ENCODE measurements at regions of chr7 and their contacts with region 1.

Region 1: GRCh38 chr7:116984917-116985316 is 31.6 kb downstream of the ST7 start:
- DNase-seq: peak in 3 of 14 experiments; percentile 55 to 62 (median 61)
- ATAC-seq: peak; percentile 55
- H3K4me3 ChIP-seq: no peak overlapping the region
- H3K4me3 Mint-ChIP-seq: no peak overlapping the region
- H3K27ac ChIP-seq: no peak overlapping the region
- H3K27ac Mint-ChIP-seq: no peak overlapping the region
- H3K4me1 ChIP-seq: no peaks in the 10 kb centered on the region
- H3K4me1 Mint-ChIP-seq: peaks cover 3% of the 10 kb centered on the region
- H3K27me3 ChIP-seq: no peaks in the 10 kb centered on the region
- H3K27me3 Mint-ChIP-seq: no peaks in the 10 kb centered on the region
- CTCF ChIP-seq: peak; percentile 83

Region 2: DNA sequence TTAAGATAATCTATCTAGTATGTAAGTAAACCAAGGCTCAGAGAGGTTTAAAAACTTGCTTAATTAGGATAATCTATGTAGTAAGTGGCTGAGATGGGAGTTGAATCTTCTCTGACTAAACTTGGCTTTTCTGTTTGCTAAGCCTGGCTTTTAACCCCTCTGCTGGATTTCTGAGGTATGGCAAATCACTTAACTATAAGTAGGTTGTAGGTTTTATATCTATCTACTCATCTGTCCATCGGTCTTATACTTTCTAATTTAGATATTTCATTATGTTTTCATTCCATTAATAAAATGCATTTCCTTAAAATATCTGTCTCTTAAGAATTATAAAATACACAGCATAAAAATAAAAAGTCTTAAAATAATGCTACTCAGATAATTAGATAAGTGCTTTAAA is 27.8 kb after region 1 on chr7:
- CTCF ChIA-PET with region 1: interaction called, 10 read pairs
- POLR2A ChIA-PET with region 1: interaction called, 5 read pairs
- intact Hi-C with region 1: loop called (anchors 2 kb)
- DNase-seq: peak in 3 of 14 experiments; percentile 32 to 57 (median 52)
- ATAC-seq: peak; percentile 59
- H3K4me3 ChIP-seq: no peak overlapping the region
- H3K4me3 Mint-ChIP-seq: no peak overlapping the region
- H3K27ac ChIP-seq: no peak overlapping the region
- H3K27ac Mint-ChIP-seq: no peak overlapping the region
- H3K4me1 ChIP-seq: peaks cover 18% of the 10 kb centered on the region
- H3K4me1 Mint-ChIP-seq: peaks cover 74% of the 10 kb centered on the region
- H3K27me3 ChIP-seq: no peaks in the 10 kb centered on the region
- H3K27me3 Mint-ChIP-seq: no peaks in the 10 kb centered on the region
- CTCF ChIP-seq: peak; percentile 54

Region 3: DNA sequence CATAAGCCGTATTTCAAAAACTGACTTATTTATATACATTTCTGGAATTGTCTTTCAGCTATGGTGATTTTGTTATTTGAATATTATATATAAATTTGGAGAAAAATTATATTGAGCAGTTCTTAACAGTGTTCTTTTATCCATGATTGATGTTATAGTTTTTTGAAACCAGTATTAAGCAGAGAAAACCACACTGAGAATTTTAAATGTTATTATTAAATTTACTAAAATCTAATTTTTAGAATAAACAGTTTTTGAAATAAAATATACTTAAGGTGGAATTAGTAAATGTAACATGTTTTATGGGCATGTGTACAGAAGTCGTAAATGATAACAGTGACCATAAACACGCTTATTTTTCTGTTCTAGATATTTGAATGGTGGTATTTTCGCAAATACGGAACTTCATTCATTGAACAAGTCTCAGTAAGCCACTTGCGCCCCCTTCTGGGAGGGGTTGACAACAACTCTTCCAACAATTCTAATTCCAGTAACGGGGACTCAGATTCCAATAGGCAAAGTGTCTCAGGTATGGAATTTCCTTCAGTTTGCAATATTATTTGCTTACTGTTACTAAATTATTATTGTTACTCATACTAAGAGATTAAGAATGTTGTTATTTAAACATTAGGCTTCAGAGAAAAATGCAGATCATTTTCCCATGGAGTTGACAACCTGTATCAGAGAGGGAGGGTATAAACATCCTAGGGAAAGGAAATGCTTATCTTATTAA is 134.4 kb after region 1 on chr7:
- CTCF ChIA-PET with region 1: interaction called, 4 read pairs
- POLR2A ChIA-PET with region 1: no interaction called
- intact Hi-C with region 1: loop called (anchors 1 kb)
- DNase-seq: peak; percentile 56 to 86 (median 70)
- ATAC-seq: peak; percentile 57
- H3K4me3 ChIP-seq: no peak overlapping the region
- H3K4me3 Mint-ChIP-seq: no peak overlapping the region
- H3K27ac ChIP-seq: no peak overlapping the region
- H3K27ac Mint-ChIP-seq: no peak overlapping the region
- H3K4me1 ChIP-seq: no peaks in the 10 kb centered on the region
- H3K4me1 Mint-ChIP-seq: no peaks in the 10 kb centered on the region
- H3K27me3 ChIP-seq: no peaks in the 10 kb centered on the region
- H3K27me3 Mint-ChIP-seq: no peaks in the 10 kb centered on the region
- CTCF ChIP-seq: peak; percentile 89